Left colon (tissue), 2 donors: ENCODE measurements at regions of chr12 and their contacts with region 1.

Region 1: GRCh38 chr12:51254592-51254991 is 15.6 kb downstream of the SMAGP start:
- DNase-seq: no peak
- ATAC-seq: no peak

Region 2: GRCh38 chr12:51341259-51342007 is 86.8 kb after region 1 on chr12:
- intact Hi-C with region 1: loop called in 1 of 2 experiments (anchors 10 kb)
- DNase-seq: peak; percentile 57 to 81
- ATAC-seq: peak; percentile 89